SK-N-SH (cell line): ENCODE measurements at regions of chr13 and their contacts with region 1.

Region 1: DNA sequence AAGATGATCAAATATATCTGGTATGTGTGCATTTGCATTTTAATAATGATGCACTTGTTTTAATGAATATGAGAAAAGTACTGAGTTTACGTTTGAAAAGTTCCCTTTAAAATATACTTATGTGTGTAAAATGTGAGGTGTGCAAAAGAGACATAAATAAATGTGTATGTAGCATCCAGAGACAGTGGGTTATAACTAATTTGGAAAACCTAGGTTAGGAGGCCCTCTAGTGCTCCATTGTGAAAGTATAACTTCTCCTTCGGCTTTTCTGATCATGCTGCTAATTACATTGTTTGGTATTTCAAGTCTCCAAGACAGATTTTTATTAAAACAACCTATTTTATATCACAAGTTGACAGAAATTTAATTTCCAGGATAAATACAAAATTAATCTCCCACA is 30.1 kb downstream of the SCEL start:
- DNase-seq: peak; percentile 39
- H3K4me3 ChIP-seq: no peak overlapping the region
- H3K27ac ChIP-seq: no peak overlapping the region
- H3K4me1 ChIP-seq: no peaks in the 10 kb centered on the region
- H3K27me3 ChIP-seq: no peaks in the 10 kb centered on the region
- CTCF ChIP-seq: peak; percentile 75
- EP300 ChIP-seq: no peak
- RAD21 ChIP-seq: peak; percentile 89

Region 2: DNA sequence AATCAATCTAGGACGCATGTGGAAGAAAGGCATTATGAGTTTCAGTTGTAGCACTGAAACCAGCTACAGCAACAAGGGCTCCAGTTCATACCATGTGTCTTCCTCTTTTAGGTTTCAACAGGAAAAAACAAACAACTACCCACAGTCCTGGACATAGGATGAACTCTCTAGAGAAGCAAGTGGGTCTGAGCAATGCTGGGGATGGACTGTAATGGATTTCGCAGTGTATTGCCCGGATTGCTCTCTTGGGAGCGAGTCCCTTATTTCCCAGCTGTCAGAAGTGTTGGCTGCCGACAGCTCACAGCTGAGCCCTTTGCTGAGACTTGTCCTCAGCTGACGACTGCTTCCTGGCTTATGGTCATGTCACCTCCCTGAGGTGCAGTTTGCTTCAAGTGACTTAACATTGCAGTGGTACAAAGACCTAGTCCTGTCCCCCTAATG is 226.7 kb before region 1 on chr13:
- CTCF ChIA-PET with region 1: no interaction called
- POLR2A ChIA-PET with region 1: no interaction called
- DNase-seq: no peak
- H3K4me3 ChIP-seq: no peak overlapping the region
- H3K27ac ChIP-seq: no peak overlapping the region
- H3K4me1 ChIP-seq: no peaks in the 10 kb centered on the region; a peak in 2 of 4 replicates
- H3K27me3 ChIP-seq: 0 out of 2 replicates have a peak, but pooled peaks cover 8% of the 10 kb centered on the region
- CTCF ChIP-seq: no peak
- EP300 ChIP-seq: no peak
- RAD21 ChIP-seq: no peak

Region 3: DNA sequence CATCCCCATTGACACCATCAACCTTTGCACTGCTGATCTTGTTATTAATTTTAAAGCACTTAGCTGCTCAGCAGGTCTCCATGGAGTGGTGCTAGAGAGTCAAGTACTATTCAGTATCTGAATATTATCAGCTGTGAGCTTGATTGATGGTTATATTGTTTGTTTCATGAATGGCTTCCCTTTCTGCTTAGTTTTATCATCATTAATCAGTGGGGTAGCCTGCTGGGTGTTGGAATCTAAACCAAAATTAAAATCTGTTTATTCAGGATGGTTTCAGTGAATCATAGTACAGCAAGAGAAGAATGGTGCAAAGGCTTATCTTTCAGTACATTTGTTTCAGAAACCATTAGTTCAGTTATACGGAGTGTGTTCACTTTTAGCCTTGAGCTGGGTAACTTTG is 72.7 kb before region 1 on chr13:
- CTCF ChIA-PET with region 1: interaction called, 44 read pairs
- POLR2A ChIA-PET with region 1: no interaction called
- DNase-seq: peak; percentile 26
- H3K4me3 ChIP-seq: no peak overlapping the region
- H3K27ac ChIP-seq: no peak overlapping the region
- H3K4me1 ChIP-seq: no peaks in the 10 kb centered on the region
- H3K27me3 ChIP-seq: peaks cover 6% of the 10 kb centered on the region; the same call in 1 of the 2 replicates
- CTCF ChIP-seq: peak; percentile 73
- EP300 ChIP-seq: no peak
- RAD21 ChIP-seq: peak; percentile 69